Left colon (tissue), 2 donors: ENCODE measurements at regions of chr9 and their contacts with region 1.

Region 1: GRCh38 chr9:35903049-35903448 is 3.0 kb upstream of the HRCT1 start:
- DNase-seq: no peak
- ATAC-seq: peak; percentile 12

Region 2: GRCh38 chr9:35945341-35946018 is 42.4 kb after region 1 on chr9:
- intact Hi-C with region 1: loop called in 1 of 2 experiments (anchors 5 kb)
- DNase-seq: peak; percentile 82 to 92
- ATAC-seq: peak; percentile 28

Region 3: DNA sequence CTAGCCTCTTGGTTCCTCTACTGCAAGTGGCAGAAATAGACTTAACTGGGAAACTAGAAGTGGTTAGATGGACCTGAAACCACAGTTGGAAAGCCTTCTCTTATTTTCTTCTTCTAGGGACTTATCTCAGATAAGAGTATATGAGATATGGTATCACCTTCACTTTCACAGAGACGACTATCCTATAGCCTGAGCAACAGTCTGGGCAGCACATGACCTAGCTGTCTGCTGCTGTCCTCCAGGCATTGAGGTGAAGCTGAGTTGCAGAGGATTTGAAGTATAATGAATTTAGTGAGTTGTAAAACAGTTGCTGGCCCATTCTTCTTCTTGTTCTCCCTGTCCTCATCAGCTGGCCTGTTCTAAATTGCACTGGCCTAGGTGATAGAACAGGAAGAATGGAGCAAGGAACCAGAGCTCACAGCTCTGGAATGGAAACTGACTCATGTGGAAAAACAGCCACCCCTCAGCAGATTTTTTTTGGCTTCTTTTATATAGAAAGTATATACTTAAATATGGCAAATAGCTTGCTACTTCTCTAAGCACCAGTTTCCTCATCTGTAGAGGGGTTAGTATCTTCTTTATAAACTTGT is 161.5 kb after region 1 on chr9:
- intact Hi-C with region 1: no loop called
- DNase-seq: no peak
- ATAC-seq: no peak